ENCODE measurements at regions of chr1 and their contacts with region 1.

Region 1: DNA sequence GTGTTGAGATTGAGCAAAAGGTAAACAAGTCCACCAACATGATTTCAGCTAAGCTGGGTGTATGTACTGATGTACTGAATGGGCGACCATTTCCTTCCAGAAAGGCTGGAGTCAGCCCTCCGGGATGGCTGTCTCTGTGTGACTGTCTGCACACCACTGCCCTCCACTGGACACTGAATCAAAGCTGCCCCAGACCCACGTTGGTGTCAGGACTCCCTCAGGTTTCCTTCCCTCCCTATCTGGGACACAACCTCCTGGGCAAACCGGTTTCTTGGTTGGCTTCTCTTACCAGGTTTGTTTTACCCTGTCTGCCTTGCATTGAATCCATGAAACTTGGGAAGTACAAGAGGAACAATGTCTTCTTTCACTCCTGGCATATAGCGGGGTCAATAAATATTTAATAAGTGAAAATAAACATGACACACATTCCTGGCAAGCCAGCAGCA is 5.3 kb upstream of the SRP9 start:
- DNase-seq: peak; percentile 81 to 90 (median 84)
- ATAC-seq: peak; percentile 81 to 90 (median 88)
- H3K4me3 ChIP-seq: no peak overlapping the region
- H3K27ac ChIP-seq: peak overlapping the region in 9 of 12 donors; percentile 2 to 75 (median 44)
- H3K4me1 ChIP-seq: peaks cover under 1 to 70% (median 40%) of the 10 kb centered on the region in 12 donors
- H3K27me3 ChIP-seq: no peaks in the 10 kb centered on the region
- CTCF ChIP-seq: peak; percentile 76 to 94 (median 90)
- POLR2A ChIP-seq: no peak

Region 2: DNA sequence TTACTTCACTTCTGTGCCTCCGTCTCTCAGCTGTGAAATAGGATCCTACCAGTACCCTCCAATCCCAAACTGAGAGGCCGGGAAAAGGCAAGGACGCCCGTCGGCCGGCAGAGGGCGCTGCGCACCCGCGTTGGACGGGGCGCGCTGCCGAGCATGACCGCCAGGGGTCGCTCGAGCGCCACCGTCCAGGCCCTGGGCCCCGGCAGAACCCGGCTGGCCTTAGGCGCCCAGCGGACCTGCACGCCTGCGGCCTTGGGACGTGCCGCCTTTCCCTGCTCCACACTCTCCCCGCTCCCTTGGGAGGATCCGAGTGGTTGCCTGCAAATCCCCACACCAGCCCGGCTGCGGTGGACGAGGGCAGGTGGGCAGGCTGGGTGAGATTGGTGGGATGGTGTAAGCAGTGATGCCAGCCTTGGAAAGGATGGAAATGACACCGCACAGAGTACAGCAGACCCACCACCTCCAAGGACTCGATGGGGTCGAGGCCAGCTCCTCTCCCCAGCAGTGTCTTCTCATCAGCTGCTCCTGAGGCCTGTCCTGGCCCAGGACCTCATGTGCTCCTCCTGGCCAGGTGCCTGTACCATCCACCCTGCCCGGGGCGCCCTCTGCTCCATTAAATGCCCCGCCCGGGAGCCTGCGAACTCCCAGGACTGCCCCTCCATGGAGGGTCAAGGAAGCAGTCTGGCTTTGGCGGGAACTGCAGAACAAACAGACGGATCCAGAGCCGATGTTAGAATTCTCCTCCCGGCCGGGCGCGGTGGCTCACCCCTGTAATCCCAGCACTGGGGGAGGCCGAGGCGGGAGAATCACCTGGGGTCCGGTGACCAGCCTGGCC is 297.1 kb before region 1 on chr1:
- intact Hi-C with region 1: loop called (anchors 1 to 5 kb)
- DNase-seq: peak; percentile 62 to 88 (median 66)
- ATAC-seq: peak; percentile 69 to 91 (median 88)
- H3K4me3 ChIP-seq: peak overlapping the region in 5 of 12 donors; percentile 10 to 35 (median 26)
- H3K27ac ChIP-seq: peak overlapping the region in 1 of 12 donors; percentile 13
- H3K4me1 ChIP-seq: peaks cover 0 to 11% (median 5%) of the 10 kb centered on the region in 12 donors
- H3K27me3 ChIP-seq: no peaks in the 10 kb centered on the region
- CTCF ChIP-seq: peak in 11 of 12 donors; percentile 100
- POLR2A ChIP-seq: no peak

Region 3: GRCh38 chr1:225480825-225481434 is 291.4 kb before region 1 on chr1:
- intact Hi-C with region 1: loop called in 4 of 10 experiments (anchors 2 to 5 kb)
- DNase-seq: no peak
- ATAC-seq: peak in 3 of 4 donors; percentile 43 to 63 (median 50)
- H3K4me3 ChIP-seq: no peak overlapping the region
- H3K27ac ChIP-seq: no peak overlapping the region
- H3K4me1 ChIP-seq: peaks cover 0 to 9% (median 0%) of the 10 kb centered on the region in 12 donors
- H3K27me3 ChIP-seq: no peaks in the 10 kb centered on the region
- CTCF ChIP-seq: peak; percentile 42 to 71 (median 60)
- POLR2A ChIP-seq: no peak

Region 4: GRCh38 chr1:225554216-225554812 is 218.0 kb before region 1 on chr1:
- intact Hi-C with region 1: loop called (anchors 2 to 5 kb)
- DNase-seq: no peak
- ATAC-seq: peak in 1 of 4 donors; percentile 43
- H3K4me3 ChIP-seq: no peak overlapping the region
- H3K27ac ChIP-seq: no peak overlapping the region
- H3K4me1 ChIP-seq: peaks cover 0 to 24% (median 5%) of the 10 kb centered on the region in 12 donors
- H3K27me3 ChIP-seq: no peaks in the 10 kb centered on the region
- CTCF ChIP-seq: peak; percentile 39 to 73 (median 60)
- POLR2A ChIP-seq: no peak

Region 5: GRCh38 chr1:225845571-225846259 is 73.4 kb after region 1 on chr1:
- intact Hi-C with region 1: loop called in 8 of 10 experiments (anchors 1 to 5 kb)
- DNase-seq: peak; percentile 77 to 87 (median 82)
- ATAC-seq: peak; percentile 66 to 83 (median 82)
- H3K4me3 ChIP-seq: no peak overlapping the region
- H3K27ac ChIP-seq: peak overlapping the region in 6 of 12 donors; percentile 6 to 71 (median 17)
- H3K4me1 ChIP-seq: peaks cover 0 to 30% (median 16%) of the 10 kb centered on the region in 12 donors
- H3K27me3 ChIP-seq: no peaks in the 10 kb centered on the region
- CTCF ChIP-seq: peak; percentile 56 to 87 (median 74)
- POLR2A ChIP-seq: no peak